ENCODE measurements at regions of chr20 and their contacts with region 1.

Region 1: DNA sequence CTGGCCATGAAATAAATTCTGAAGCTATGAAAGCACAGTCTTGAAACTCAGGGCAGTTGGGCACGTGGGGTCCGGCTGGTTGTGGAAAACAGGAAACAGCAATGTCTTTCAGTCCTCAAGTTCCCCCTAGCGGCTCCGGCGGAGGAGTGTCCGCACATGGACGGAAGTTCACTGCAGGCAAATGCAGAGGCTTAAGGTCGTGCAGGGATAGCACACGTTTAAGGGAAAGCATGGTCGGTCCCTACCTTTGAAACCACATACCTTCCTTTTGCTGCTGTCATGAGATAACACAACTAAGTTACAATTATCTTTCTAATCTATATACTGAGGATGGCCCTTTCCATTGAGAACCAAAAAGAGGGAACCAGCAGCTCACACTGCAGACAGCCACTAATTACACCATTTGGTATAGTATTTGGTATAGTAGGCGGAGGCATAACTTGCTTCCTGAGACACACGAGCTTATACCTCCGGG is 52.6 kb upstream of the NFATC2 start:
- DNase-seq: peak; percentile 89 to 90
- ATAC-seq: peak; percentile 98 to 99
- H3K4me3 ChIP-seq: no peak overlapping the region
- H3K27ac ChIP-seq: peak overlapping the region; percentile 43 to 48; a peak in 3 of 6 replicates
- H3K4me1 ChIP-seq: peaks cover 5% of the 10 kb centered on the region
- CTCF ChIP-seq: peak; percentile 89
- EP300 ChIP-seq: no peak
- POLR2A ChIP-seq: no peak
- RAD21 ChIP-seq: peak; percentile 98 to 99

Region 2: DNA sequence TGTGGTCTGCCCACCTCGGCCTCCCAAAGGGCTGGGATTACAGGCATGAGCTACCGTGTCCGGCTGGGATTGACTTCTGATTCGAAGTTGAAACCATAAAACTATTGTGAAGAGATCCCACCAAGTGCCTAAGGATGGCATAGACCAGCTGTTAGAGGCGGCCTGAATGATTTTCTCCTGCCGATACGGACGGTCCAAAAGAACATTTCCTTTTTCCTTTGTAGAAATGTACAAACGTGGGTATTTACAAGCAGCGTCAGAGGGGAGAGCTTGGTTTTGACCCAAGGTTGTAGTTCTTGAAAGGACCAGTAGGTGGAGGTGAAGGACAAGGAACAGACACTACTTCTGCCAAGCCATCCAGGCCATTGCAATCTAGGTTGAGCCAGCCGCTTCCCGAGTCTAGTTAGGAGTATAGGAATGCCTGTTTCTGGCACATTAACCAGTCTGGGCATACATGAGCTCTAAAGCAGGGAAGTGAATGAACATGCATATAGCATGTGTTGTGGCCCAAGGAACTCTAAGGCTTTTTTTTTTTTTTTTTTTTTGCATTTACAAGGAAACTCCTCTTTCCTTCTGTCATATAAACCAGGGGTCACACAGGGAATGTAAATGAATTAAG is 607.4 kb before region 1 on chr20:
- CTCF ChIA-PET with region 1: interaction called, 54 read pairs
- POLR2A ChIA-PET with region 1: no interaction called
- DNase-seq: peak; percentile 76 to 92
- ATAC-seq: peak; percentile 96
- H3K4me3 ChIP-seq: no peak overlapping the region
- H3K27ac ChIP-seq: peak overlapping the region; percentile 38 to 75; a peak in 3 of 6 replicates
- H3K4me1 ChIP-seq: peaks cover 4% of the 10 kb centered on the region; the same call in 2 of the 3 replicates
- CTCF ChIP-seq: peak; percentile 92
- EP300 ChIP-seq: no peak
- POLR2A ChIP-seq: no peak
- RAD21 ChIP-seq: peak; percentile 96 to 98

Region 3: DNA sequence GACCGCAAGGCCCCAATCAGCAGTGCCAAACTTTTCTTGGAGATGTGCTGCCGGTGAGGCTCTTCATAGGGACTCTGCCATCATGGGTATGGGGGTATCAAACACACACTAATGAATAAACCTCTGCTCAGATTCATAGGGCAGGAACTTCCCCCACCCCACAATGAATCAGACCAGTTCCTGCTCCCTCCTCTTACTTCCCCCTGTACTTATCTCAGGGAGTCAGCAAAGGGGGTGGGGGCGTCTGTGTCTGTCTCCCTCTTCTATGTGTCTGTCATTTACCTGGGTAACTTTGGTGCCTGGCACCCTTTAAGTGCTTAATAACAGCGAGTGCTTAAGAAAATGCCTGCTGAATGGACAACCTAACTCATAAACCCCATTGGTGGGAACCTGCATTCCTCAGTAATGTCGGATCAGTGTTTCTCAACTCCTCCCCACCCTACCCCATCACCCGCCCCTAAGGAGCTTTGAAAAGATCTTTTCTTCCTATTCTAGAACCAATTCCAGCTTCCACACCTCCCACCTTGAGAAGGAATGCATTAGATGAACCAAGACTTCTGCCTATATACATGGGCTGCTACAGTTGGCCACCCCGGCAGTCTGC is 573.6 kb before region 1 on chr20:
- CTCF ChIA-PET with region 1: no interaction called
- POLR2A ChIA-PET with region 1: no interaction called
- DNase-seq: no peak
- ATAC-seq: no peak
- H3K4me3 ChIP-seq: peak overlapping the region; percentile 76; the same call in 1 of the 3 replicates
- H3K27ac ChIP-seq: peak overlapping the region in 1 of 2 experiments; percentile 18; a peak in 2 of 6 replicates
- H3K4me1 ChIP-seq: peaks cover 12% of the 10 kb centered on the region; the same call in 1 of the 3 replicates
- CTCF ChIP-seq: no peak
- EP300 ChIP-seq: no peak
- POLR2A ChIP-seq: no peak
- RAD21 ChIP-seq: no peak

Region 4: GRCh38 chr20:51345601-51346101 is 249.4 kb before region 1 on chr20:
- CTCF ChIA-PET with region 1: interaction called, 10 read pairs
- POLR2A ChIA-PET with region 1: no interaction called
- DNase-seq: peak; percentile 24 to 60
- ATAC-seq: peak; percentile 70 to 82
- H3K4me3 ChIP-seq: no peak overlapping the region
- H3K27ac ChIP-seq: peak overlapping the region; percentile 76 to 81
- H3K4me1 ChIP-seq: peaks cover 27% of the 10 kb centered on the region
- CTCF ChIP-seq: no peak
- EP300 ChIP-seq: peak; percentile 27 to 52; a peak in 2 of 5 replicates
- POLR2A ChIP-seq: no peak
- RAD21 ChIP-seq: no peak

Region 5: GRCh38 chr20:51412333-51412871 is 182.7 kb before region 1 on chr20:
- CTCF ChIA-PET with region 1: interaction called, 15 read pairs
- POLR2A ChIA-PET with region 1: no interaction called
- DNase-seq: no peak
- ATAC-seq: peak in 1 of 2 experiments; percentile 47; a peak in 3 of 6 replicates
- H3K4me3 ChIP-seq: no peak overlapping the region
- H3K27ac ChIP-seq: peak overlapping the region in 1 of 2 experiments; percentile 42; a peak in 1 of 6 replicates
- H3K4me1 ChIP-seq: no peaks in the 10 kb centered on the region
- CTCF ChIP-seq: no peak
- EP300 ChIP-seq: no peak
- POLR2A ChIP-seq: no peak
- RAD21 ChIP-seq: no peak

Region 6: GRCh38 chr20:51456511-51457509 is 138.3 kb before region 1 on chr20:
- CTCF ChIA-PET with region 1: interaction called, 11 read pairs
- POLR2A ChIA-PET with region 1: no interaction called
- DNase-seq: peak; percentile 86 to 96
- ATAC-seq: peak; percentile 93 to 94
- H3K4me3 ChIP-seq: peak overlapping the region; percentile 24; the same call in 1 of the 3 replicates
- H3K27ac ChIP-seq: peak overlapping the region; percentile 90 to 92
- H3K4me1 ChIP-seq: peaks cover 20% of the 10 kb centered on the region
- CTCF ChIP-seq: no peak
- EP300 ChIP-seq: no peak
- POLR2A ChIP-seq: peak; percentile 39
- RAD21 ChIP-seq: peak in 1 of 2 experiments; percentile 25; a peak in 2 of 5 replicates

Region 7: DNA sequence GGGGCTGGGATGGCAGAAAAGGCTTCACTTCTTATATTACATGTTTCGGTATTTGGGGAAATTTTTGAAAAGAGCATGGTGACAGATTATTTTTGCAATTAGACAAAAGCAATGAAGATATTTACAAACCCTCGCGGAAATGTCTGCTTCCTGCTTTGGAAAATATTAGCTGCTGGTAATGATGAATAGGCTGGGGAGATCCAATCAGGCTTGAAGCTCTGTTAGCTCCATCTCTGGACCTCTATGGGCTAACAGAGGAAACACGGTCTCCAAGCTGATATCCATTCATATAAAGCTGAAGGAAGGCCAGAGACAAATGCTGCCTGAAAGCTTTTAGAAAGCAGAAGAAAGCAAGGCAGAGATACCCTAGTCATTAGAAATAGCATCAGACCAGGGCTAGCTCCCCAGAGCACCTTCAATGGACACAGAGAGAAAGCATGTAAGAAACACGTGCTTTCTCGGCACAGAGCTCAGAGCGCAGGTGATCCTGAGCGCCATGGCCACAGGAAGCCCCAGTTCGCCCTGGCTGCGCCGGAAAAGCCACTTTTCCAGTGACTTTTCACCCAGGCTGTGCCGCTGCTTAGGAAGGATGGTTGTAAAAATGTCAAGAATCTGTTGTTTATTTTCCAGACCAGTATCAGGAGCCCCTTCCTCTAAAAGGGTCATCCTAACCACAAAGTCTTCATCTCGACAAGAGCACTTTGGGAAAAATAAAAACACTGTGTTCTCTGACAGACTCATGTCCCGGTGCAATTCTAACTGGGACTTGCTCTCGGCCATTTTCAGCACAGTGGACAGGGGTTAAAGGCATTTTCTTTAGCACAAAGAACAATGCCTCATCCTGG is 15.9 kb after region 1 on chr20:
- CTCF ChIA-PET with region 1: interaction called, 31 read pairs
- POLR2A ChIA-PET with region 1: no interaction called
- DNase-seq: no peak
- ATAC-seq: no peak
- H3K4me3 ChIP-seq: no peak overlapping the region
- H3K27ac ChIP-seq: no peak overlapping the region
- H3K4me1 ChIP-seq: no peaks in the 10 kb centered on the region
- CTCF ChIP-seq: no peak
- EP300 ChIP-seq: no peak
- POLR2A ChIP-seq: no peak
- RAD21 ChIP-seq: no peak

Region 8: GRCh38 chr20:51725380-51726203 is 130.5 kb after region 1 on chr20:
- CTCF ChIA-PET with region 1: no interaction called
- POLR2A ChIA-PET with region 1: no interaction called
- DNase-seq: no peak
- ATAC-seq: no peak
- H3K4me3 ChIP-seq: no peak overlapping the region
- H3K27ac ChIP-seq: no peak overlapping the region
- H3K4me1 ChIP-seq: no peaks in the 10 kb centered on the region; the same call in 2 of the 3 replicates
- CTCF ChIP-seq: no peak
- EP300 ChIP-seq: no peak
- POLR2A ChIP-seq: no peak
- RAD21 ChIP-seq: no peak

Region 9: DNA sequence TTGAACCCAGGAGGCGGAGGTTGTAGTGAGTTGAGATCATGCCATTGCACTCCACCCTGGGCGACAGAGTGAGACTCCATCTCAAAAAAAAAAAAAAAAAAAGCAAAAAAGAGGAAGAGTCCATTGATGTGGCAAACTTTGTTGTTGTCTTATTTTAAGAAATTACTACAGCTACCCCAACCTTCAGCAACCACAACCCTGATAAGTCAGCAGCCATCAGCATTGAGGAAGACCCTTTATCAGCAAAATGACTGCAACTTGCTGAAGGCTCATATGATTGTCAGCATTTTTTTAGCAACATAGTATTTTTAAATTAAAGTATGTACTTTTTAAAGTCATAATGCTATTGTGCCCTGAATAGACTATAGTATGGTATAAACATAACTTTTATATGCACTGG is 547.7 kb after region 1 on chr20:
- CTCF ChIA-PET with region 1: no interaction called
- POLR2A ChIA-PET with region 1: no interaction called
- DNase-seq: no peak
- ATAC-seq: no peak
- H3K4me3 ChIP-seq: no peak overlapping the region
- H3K27ac ChIP-seq: no peak overlapping the region
- H3K4me1 ChIP-seq: no peaks in the 10 kb centered on the region
- CTCF ChIP-seq: no peak
- EP300 ChIP-seq: no peak
- POLR2A ChIP-seq: no peak
- RAD21 ChIP-seq: no peak